ENCODE measurements at regions of chr19 and their contacts with region 1.

Region 1: GRCh38 chr19:33410915-33411401 is 37.4 kb downstream of the CEBPG start:
- DNase-seq: no peak
- H3K4me3 ChIP-seq: no peak overlapping the region
- H3K27ac ChIP-seq: no peak overlapping the region
- H3K4me1 ChIP-seq: no peaks in the 10 kb centered on the region
- H3K27me3 ChIP-seq: no peaks in the 10 kb centered on the region
- CTCF ChIP-seq: no peak
- POLR2A ChIP-seq: no peak

Region 2: GRCh38 chr19:33232656-33233055 is 178.3 kb before region 1 on chr19:
- intact Hi-C with region 1: loop called (anchors 2 kb)
- DNase-seq: no peak
- H3K4me3 ChIP-seq: no peak overlapping the region
- H3K27ac ChIP-seq: no peak overlapping the region
- H3K4me1 ChIP-seq: no peaks in the 10 kb centered on the region
- H3K27me3 ChIP-seq: peaks cover 2% of the 10 kb centered on the region in 2 donors
- CTCF ChIP-seq: no peak
- POLR2A ChIP-seq: no peak

Region 3: DNA sequence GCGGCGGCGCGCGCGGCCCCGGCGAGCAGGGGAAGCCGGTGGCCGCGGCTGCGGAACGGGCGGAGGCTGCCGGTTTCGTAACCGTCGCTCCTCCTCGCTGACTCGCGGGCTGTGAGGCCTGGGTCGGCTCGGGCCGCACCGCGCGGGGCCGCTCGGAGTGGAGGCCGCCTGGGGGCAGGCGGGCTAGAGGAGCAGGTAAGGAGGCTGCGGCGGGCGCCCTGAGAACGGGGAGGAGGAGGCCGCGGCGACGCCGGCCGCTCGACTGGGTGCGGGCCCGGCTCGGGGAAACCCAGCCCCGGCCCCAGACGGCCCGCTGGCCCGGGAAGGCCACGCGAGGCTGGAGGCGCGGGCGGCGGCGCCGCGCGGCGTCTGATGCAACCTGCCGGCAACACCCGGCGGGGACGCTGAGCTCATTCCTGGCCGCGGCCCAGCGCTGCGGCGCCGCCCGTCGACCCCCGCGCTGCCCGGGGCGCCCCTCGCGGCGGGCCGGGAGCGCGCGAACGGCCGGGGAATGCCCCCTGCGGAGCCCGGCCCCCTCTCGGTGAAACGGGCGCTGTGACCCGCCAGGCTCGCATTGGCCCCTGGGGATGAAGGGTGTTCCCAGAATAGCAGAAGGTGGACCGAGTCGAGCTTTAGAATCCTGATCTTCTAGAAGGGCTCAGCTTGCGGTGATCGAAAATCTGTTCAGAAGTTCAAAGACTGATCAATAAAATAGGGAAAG is 37.1 kb before region 1 on chr19 and contains the start of gene CEBPG:
- intact Hi-C with region 1: no loop called
- DNase-seq: no peak
- H3K4me3 ChIP-seq: peak within 1 kb of the TSS; percentile 81 to 93 (median 90)
- H3K27ac ChIP-seq: peak within 1 kb of the TSS; percentile 95 to 99
- H3K4me1 ChIP-seq: no peaks in the 10 kb centered on the region
- H3K27me3 ChIP-seq: no peaks in the 10 kb centered on the region
- CTCF ChIP-seq: peak in 1 of 3 donors; percentile 37
- POLR2A ChIP-seq: no peak
- total RNA-seq, gene CEBPG: 23.3 to 32.0 (median 23.4) TPM